GM12878 (cell line): ENCODE measurements at regions of chr1 and their contacts with region 1.

Region 1: GRCh38 chr1:206716870-206717673 is 32.4 kb downstream of the MAPKAPK2 start:
- DNase-seq: peak; percentile 88
- ATAC-seq: peak; percentile 78
- H3K4me3 ChIP-seq: 0 out of 2 replicates have a peak overlapping the region, but pooled peaks have one; percentile 19
- H3K27ac ChIP-seq: peak overlapping the region; percentile 73
- H3K4me1 ChIP-seq: peaks cover 74% of the 10 kb centered on the region
- H3K27me3 ChIP-seq: no peaks in the 10 kb centered on the region
- CTCF ChIP-seq: no peak
- EP300 ChIP-seq: peak in 1 of 2 experiments; percentile 34; a peak in 1 of 4 replicates
- POLR2A ChIP-seq: no peak
- RAD21 ChIP-seq: no peak

Region 2: GRCh38 chr1:206658264-206658980 is 58.6 kb before region 1 on chr1:
- CTCF ChIA-PET with region 1: interaction called, 37 read pairs
- POLR2A ChIA-PET with region 1: no interaction called
- RAD21 ChIA-PET with region 1: interaction called, 30 read pairs
- SMC1A ChIA-PET with region 1: interaction called, 67 read pairs
- in situ Hi-C with region 1: no loop called
- intact Hi-C with region 1: no loop called
- DNase-seq: no peak
- ATAC-seq: peak; percentile 93
- H3K4me3 ChIP-seq: no peak overlapping the region
- H3K27ac ChIP-seq: no peak overlapping the region
- H3K4me1 ChIP-seq: peaks cover 9% of the 10 kb centered on the region
- H3K27me3 ChIP-seq: no peaks in the 10 kb centered on the region
- CTCF ChIP-seq: peak; percentile 74 to 99 (median 98)
- EP300 ChIP-seq: no peak
- POLR2A ChIP-seq: no peak
- RAD21 ChIP-seq: peak; percentile 62

Region 3: DNA sequence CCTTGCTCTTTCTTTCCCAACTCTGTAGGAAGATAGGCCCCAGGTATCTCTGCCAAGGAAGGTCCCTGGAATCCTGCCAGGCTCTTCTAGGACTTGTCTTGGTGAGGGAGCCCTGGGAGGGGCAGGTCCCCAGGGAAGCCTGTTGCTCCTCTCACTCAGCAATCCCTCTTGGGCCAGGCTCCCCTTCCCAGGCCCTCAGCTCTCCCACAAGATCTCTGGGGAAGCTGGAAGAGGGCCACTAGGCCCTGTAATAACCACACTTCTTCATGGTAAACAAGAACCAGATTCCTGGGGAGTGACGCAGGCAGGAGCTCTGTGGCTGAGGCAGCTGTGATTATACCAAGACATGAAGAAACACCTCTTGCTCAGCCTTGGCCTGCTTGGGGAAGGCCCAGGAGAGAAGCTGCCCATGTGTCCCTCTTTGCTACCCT is 42.3 kb before region 1 on chr1:
- CTCF ChIA-PET with region 1: interaction called, 11 read pairs
- POLR2A ChIA-PET with region 1: interaction called, 334 read pairs
- RAD21 ChIA-PET with region 1: interaction called, 22 read pairs
- SMC1A ChIA-PET with region 1: interaction called, 29 read pairs
- in situ Hi-C with region 1: no loop called
- intact Hi-C with region 1: no loop called
- DNase-seq: no peak
- ATAC-seq: no peak
- H3K4me3 ChIP-seq: no peak overlapping the region
- H3K27ac ChIP-seq: no peak overlapping the region
- H3K4me1 ChIP-seq: peaks cover 51% of the 10 kb centered on the region
- H3K27me3 ChIP-seq: no peaks in the 10 kb centered on the region
- CTCF ChIP-seq: no peak
- EP300 ChIP-seq: no peak
- POLR2A ChIP-seq: no peak
- RAD21 ChIP-seq: no peak

Region 4: DNA sequence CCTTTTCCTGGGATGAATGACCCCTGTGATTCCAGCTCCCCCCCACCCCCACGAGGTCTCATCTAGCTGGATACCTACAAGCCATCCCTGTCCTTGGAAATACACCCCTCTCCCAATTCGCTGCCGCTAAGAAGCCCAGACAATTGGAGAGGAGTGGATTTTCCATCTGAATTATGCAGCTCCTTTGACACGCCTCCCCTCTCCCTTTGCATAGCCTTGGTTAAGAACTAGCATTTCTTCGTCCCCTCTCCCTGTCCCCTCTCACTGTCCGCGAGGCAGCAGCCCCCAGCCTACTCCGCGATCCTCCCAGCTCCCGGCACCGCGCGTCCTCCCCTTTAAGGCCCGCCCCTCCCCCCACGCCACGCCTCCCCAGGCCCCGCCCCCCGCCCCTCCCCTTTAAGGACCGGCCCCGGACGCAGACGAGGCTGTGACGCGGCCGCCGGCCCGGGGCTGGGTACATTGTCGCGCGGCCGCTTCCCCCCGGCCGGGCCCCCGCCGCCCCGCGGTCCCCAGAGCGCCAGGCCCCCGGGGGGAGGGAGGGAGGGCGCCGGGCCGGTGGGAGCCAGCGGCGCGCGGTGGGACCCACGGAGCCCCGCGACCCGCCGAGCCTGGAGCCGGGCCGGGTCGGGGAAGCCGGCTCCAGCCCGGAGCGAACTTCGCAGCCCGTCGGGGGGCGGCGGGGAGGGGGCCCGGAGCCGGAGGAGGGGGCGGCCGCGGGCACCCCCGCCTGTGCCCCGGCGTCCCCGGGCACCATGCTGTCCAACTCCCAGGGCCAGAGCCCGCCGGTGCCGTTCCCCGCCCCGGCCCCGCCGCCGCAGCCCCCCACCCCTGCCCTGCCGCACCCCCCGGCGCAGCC is 32.4 kb before region 1 on chr1 and contains the start of gene MAPKAPK2:
- CTCF ChIA-PET with region 1: interaction called, 16 read pairs
- POLR2A ChIA-PET with region 1: interaction called, 334 read pairs
- RAD21 ChIA-PET with region 1: interaction called, 22 read pairs
- SMC1A ChIA-PET with region 1: interaction called, 222 read pairs
- in situ Hi-C with region 1: no loop called
- intact Hi-C with region 1: loop called (anchors 2 kb)
- DNase-seq: no peak
- ATAC-seq: peak; percentile 55
- H3K4me3 ChIP-seq: peak within 1 kb of the TSS; percentile 91
- H3K27ac ChIP-seq: peak within 1 kb of the TSS; percentile 86
- H3K4me1 ChIP-seq: peaks cover 42% of the 10 kb centered on the region
- H3K27me3 ChIP-seq: no peaks in the 10 kb centered on the region
- CTCF ChIP-seq: no peak
- EP300 ChIP-seq: no peak
- POLR2A ChIP-seq: peak; percentile 64
- RAD21 ChIP-seq: no peak
- polyA plus RNA-seq, gene MAPKAPK2: 0.72 to 4.9 TPM

Region 5: GRCh38 chr1:206700445-206701036 is 16.5 kb before region 1 on chr1:
- CTCF ChIA-PET with region 1: interaction called, 10 read pairs
- POLR2A ChIA-PET with region 1: interaction called, 54 read pairs
- RAD21 ChIA-PET with region 1: interaction called, 28 read pairs
- SMC1A ChIA-PET with region 1: interaction called, 34 read pairs
- in situ Hi-C with region 1: no loop called
- intact Hi-C with region 1: no loop called
- DNase-seq: no peak
- ATAC-seq: peak; percentile 7; the same call in 1 of the 3 replicates
- H3K4me3 ChIP-seq: no peak overlapping the region
- H3K27ac ChIP-seq: no peak overlapping the region
- H3K4me1 ChIP-seq: peaks cover 50% of the 10 kb centered on the region
- H3K27me3 ChIP-seq: no peaks in the 10 kb centered on the region
- CTCF ChIP-seq: no peak
- EP300 ChIP-seq: no peak
- POLR2A ChIP-seq: no peak
- RAD21 ChIP-seq: no peak

Region 6: DNA sequence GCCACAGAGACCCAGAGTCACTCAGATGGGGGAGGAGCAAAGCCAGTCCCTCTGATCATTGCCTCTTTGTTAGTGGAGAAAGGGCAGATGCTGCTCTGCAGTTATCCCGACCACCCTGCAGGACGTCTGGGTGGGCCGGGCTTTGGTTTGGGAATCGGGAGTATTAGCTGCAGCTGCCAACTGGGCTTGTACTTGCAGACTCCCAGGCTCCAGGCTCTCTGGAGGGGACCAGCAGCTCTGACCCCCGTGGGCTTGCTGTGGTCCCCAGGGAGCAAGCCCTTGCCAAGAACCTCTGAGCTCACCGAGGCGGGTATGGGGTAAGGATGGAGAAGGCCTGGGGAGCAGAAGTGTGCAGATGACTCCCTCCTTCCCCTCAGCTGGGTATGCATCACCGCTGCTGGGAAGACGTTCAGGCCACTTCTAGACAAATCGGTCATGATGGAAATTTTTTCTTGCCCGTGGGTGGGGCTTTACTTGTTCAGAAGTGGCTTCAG is 10.7 kb before region 1 on chr1:
- CTCF ChIA-PET with region 1: interaction called, 11 read pairs
- POLR2A ChIA-PET with region 1: interaction called, 54 read pairs
- RAD21 ChIA-PET with region 1: interaction called, 28 read pairs
- SMC1A ChIA-PET with region 1: interaction called, 34 read pairs
- in situ Hi-C with region 1: no loop called
- intact Hi-C with region 1: no loop called
- DNase-seq: no peak
- ATAC-seq: no peak
- H3K4me3 ChIP-seq: no peak overlapping the region
- H3K27ac ChIP-seq: no peak overlapping the region
- H3K4me1 ChIP-seq: peaks cover 60% of the 10 kb centered on the region
- H3K27me3 ChIP-seq: no peaks in the 10 kb centered on the region
- CTCF ChIP-seq: no peak
- EP300 ChIP-seq: no peak
- POLR2A ChIP-seq: no peak
- RAD21 ChIP-seq: no peak

Region 7: GRCh38 chr1:206925106-206925736 is 208.1 kb after region 1 on chr1:
- CTCF ChIA-PET with region 1: no interaction called
- POLR2A ChIA-PET with region 1: interaction called, 6 read pairs
- RAD21 ChIA-PET with region 1: interaction called, 4 read pairs
- SMC1A ChIA-PET with region 1: interaction called, 5 read pairs
- in situ Hi-C with region 1: no loop called
- intact Hi-C with region 1: loop called (anchors 5 kb)
- DNase-seq: peak; percentile 91
- ATAC-seq: peak; percentile 72
- H3K4me3 ChIP-seq: no peak overlapping the region; the same call in 1 of the 2 replicates
- H3K27ac ChIP-seq: peak overlapping the region; percentile 99
- H3K4me1 ChIP-seq: peaks cover 51% of the 10 kb centered on the region
- H3K27me3 ChIP-seq: no peaks in the 10 kb centered on the region
- CTCF ChIP-seq: peak in 1 of 3 experiments; percentile 29; a peak in 1 of 6 replicates
- EP300 ChIP-seq: no peak; a peak in 1 of 4 replicates
- POLR2A ChIP-seq: no peak
- RAD21 ChIP-seq: peak; percentile 56